WTC11 (cell line): ENCODE measurements at regions of chr9 and their contacts with region 1.

Region 1: DNA sequence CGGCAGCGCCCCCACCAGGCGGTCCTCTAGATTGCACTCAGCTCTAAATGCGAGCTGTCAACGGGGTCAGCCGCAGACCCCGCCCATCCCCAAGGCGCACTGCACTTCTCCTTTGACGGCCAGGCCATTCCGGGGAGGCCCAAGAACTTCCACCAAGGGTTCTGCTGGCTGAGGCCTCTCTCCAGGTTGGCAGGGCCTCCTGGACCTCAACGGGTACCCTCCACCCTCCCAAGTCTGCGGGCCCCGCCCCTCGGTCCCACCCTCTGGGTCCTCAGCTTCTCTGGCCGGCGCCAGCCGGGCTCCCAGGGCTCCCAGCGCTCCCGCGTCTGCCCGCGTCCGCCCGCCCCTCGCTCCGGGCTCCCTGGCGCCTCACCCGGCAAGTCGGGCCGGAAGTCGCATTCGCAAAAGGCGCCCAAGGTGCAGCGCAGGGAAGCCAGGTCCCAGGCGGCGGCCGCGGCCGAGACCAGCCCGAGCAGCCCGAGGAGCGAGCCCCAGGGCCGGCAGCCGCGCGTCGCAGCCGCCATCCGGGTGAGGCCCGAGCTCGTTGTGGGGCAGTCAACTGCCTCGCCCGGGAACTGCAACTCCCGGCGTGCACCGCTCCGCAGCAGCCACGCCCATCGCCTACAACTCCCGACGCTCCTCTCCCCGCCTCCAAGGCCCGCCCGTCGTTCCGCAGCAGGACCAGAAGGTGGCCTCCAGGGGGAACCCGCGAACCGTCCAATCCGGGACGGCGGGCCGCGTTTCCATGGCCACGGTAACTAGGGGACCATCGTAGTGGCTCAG is at the start of gene TOR2A:
- DNase-seq: peak; percentile 99
- ATAC-seq: peak; percentile 90
- H3K4me3 Mint-ChIP-seq: peak within 1 kb of the TSS; percentile 72
- H3K27ac Mint-ChIP-seq: no peak within 1 kb of the TSS
- H3K4me1 Mint-ChIP-seq: peaks cover 11% of the 10 kb centered on the region
- H3K27me3 Mint-ChIP-seq: peaks cover 7% of the 10 kb centered on the region
- CTCF ChIP-seq: peak; percentile 63
- total RNA-seq, gene TOR2A: 14.4 to 19.4 TPM (median 16.6 TPM) in 3 replicates

Region 2: DNA sequence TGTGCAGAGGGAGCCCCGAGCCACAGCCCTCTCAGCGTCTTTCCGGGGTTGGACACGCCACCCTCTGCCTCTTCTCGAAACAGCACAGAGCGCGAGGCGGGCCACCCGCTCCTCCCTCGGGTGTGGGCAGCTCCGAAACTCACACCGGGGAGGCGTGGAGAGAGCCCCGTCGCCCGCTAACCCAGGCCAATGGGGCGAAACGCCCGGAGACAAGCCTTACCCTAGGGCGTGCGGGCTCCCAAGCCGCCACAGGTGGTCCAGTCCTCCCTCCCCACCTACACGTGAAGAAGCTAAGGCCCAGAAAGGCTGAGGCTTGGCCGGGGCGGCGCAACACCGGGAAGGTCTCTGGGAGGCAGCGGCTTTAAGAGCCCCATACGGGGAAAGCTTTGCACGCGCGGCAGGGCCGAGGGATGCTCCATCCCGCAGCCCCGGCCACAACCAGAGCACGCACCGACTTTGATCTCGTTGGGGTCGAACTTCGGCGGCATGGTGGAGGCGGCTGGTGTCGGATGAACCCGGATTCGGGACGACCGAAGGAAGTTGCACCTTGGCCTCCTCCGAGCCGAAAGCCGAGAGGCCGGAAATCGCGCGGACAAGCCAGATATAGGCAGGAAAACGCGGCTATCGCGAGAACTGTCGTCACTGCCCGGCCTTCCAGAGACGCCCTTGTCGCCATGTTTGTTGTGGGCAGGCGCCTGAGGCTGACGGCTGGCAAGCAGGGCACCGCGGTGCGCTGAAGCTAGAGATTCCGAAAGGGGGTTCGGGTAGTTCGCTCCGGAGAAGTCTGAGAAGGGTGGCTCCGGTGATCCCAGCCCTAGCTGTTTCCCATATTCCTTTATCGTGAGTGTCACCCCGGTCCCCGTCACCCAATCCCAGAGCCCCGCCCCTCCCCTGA is 283.9 kb before region 1 on chr9 and contains the starts of genes LRSAM1 and RPL12:
- CTCF ChIA-PET with region 1: interaction called, 11 read pairs
- POLR2A ChIA-PET with region 1: no interaction called
- DNase-seq: peak; percentile 98
- ATAC-seq: peak; percentile 50
- H3K4me3 Mint-ChIP-seq: peak within 1 kb of the TSS; percentile 97
- H3K27ac Mint-ChIP-seq: peak within 1 kb of the TSS; percentile 99
- H3K4me1 Mint-ChIP-seq: peaks cover 34% of the 10 kb centered on the region
- H3K27me3 Mint-ChIP-seq: no peaks in the 10 kb centered on the region
- CTCF ChIP-seq: no peak
- total RNA-seq, gene LRSAM1: 24.6 to 32.4 TPM (median 28.8 TPM) in 3 replicates
- total RNA-seq, gene RPL12: 1,902 to 2,162 TPM (median 2,101 TPM) in 3 replicates

Region 3: GRCh38 chr9:127568971-127569885 is 165.7 kb before region 1 on chr9:
- CTCF ChIA-PET with region 1: interaction called, 10 read pairs
- POLR2A ChIA-PET with region 1: no interaction called
- DNase-seq: peak; percentile 77
- ATAC-seq: peak; percentile 79
- H3K4me3 Mint-ChIP-seq: peak overlapping the region; percentile 71
- H3K27ac Mint-ChIP-seq: no peak overlapping the region
- H3K4me1 Mint-ChIP-seq: peaks cover 26% of the 10 kb centered on the region
- H3K27me3 Mint-ChIP-seq: peaks cover 10% of the 10 kb centered on the region
- CTCF ChIP-seq: no peak

Region 4: DNA sequence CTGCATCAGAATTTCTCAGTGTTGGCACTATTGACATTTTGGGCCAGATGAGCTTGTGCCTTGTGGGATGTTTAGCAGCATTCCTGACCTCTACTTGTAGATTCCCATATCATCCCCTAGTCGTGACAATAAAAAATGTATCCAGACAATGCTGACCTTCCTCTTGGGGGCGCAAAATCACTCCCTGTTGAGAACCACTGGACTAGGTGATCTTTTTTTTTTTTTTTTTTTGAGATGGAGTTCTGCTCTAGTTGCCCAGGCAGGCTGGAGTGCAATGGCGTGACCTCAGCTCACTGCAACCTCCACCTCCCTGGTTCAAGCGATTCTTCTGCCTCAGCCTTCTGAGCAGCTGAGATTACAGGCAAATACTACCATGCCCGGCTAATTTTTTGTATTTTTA is 100.2 kb before region 1 on chr9:
- CTCF ChIA-PET with region 1: interaction called, 15 read pairs
- POLR2A ChIA-PET with region 1: no interaction called
- DNase-seq: peak; percentile 25
- ATAC-seq: peak; percentile 38
- H3K4me3 Mint-ChIP-seq: no peak overlapping the region
- H3K27ac Mint-ChIP-seq: no peak overlapping the region
- H3K4me1 Mint-ChIP-seq: peaks cover 30% of the 10 kb centered on the region
- H3K27me3 Mint-ChIP-seq: no peaks in the 10 kb centered on the region
- CTCF ChIP-seq: no peak

Region 5: GRCh38 chr9:127723450-127723849 is 11.5 kb before region 1 on chr9:
- CTCF ChIA-PET with region 1: interaction called, 73 read pairs
- POLR2A ChIA-PET with region 1: no interaction called
- DNase-seq: no peak
- ATAC-seq: no peak
- H3K4me3 Mint-ChIP-seq: no peak overlapping the region
- H3K27ac Mint-ChIP-seq: 0 out of 2 replicates have a peak overlapping the region, but pooled peaks have one; percentile 19
- H3K4me1 Mint-ChIP-seq: peaks cover 14% of the 10 kb centered on the region
- H3K27me3 Mint-ChIP-seq: no peaks in the 10 kb centered on the region
- CTCF ChIP-seq: no peak

Region 6: GRCh38 chr9:127785023-127785932 is 50.3 kb after region 1 on chr9:
- CTCF ChIA-PET with region 1: interaction called, 34 read pairs
- POLR2A ChIA-PET with region 1: no interaction called
- DNase-seq: peak; percentile 90
- ATAC-seq: peak; percentile 34
- H3K4me3 Mint-ChIP-seq: peak overlapping the region; percentile 97
- H3K27ac Mint-ChIP-seq: no peak overlapping the region
- H3K4me1 Mint-ChIP-seq: peaks cover 20% of the 10 kb centered on the region
- H3K27me3 Mint-ChIP-seq: no peaks in the 10 kb centered on the region
- CTCF ChIP-seq: peak; percentile 95

Region 7: GRCh38 chr9:127869310-127870152 is 134.6 kb after region 1 on chr9:
- CTCF ChIA-PET with region 1: interaction called, 49 read pairs
- POLR2A ChIA-PET with region 1: no interaction called
- DNase-seq: peak; percentile 96
- ATAC-seq: peak; percentile 89
- H3K4me3 Mint-ChIP-seq: no peak overlapping the region
- H3K27ac Mint-ChIP-seq: no peak overlapping the region; the same call in 1 of the 2 replicates
- H3K4me1 Mint-ChIP-seq: peaks cover 10% of the 10 kb centered on the region
- H3K27me3 Mint-ChIP-seq: no peaks in the 10 kb centered on the region
- CTCF ChIP-seq: peak; percentile 92